ENCODE measurements at regions of chr15 and their contacts with region 1.

Region 1: DNA sequence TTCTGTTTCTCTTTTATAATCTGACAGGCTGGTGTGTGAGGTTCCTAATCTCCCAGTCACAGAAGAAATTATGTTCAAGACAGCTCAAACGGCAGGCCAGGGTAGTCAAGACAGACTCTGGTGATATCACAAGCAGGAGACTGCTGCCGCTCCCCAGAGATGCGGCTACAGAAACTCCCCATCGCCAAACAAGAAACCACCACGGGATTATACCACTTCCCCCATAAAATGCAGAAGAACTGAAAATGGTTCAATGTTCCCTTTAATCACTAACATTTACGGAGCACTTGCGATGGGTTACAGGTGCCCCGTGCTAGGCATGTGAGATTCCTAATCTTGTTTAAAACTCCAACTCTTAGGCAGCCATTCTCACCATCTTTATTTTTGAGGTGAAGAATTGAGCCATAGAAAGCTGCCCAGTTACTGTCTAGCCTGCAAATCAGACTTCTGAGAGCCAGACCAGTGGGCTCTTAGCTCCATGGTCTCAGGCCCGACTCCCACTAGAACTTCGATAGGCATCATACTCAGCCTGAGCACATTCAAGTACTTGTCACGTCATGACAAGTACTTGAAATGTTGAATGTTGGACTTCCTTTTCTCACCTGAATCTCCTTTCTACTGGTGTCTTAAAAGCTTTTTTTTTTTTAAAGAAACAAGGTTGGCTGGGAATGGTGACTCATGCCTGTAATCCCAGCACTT is 58.4 kb downstream of the TBC1D2B start:
- DNase-seq: no peak
- H3K4me3 ChIP-seq: no peak overlapping the region
- H3K27ac ChIP-seq: no peak overlapping the region
- H3K4me1 ChIP-seq: no peaks in the 10 kb centered on the region
- H3K27me3 ChIP-seq: no peaks in the 10 kb centered on the region
- CTCF ChIP-seq: no peak
- EP300 ChIP-seq: no peak
- POLR2A ChIP-seq: no peak
- RAD21 ChIP-seq: no peak

Region 2: GRCh38 chr15:77974098-77974414 is 45.0 kb before region 1 on chr15:
- CTCF ChIA-PET with region 1: no interaction called
- POLR2A ChIA-PET with region 1: no interaction called
- DNase-seq: peak in 1 of 2 experiments; percentile 33
- H3K4me3 ChIP-seq: no peak overlapping the region
- H3K27ac ChIP-seq: no peak overlapping the region
- H3K4me1 ChIP-seq: no peaks in the 10 kb centered on the region
- H3K27me3 ChIP-seq: no peaks in the 10 kb centered on the region
- CTCF ChIP-seq: no peak
- EP300 ChIP-seq: no peak
- POLR2A ChIP-seq: no peak
- RAD21 ChIP-seq: no peak

Region 3: GRCh38 chr15:78082106-78083078 is 63.3 kb after region 1 on chr15:
- CTCF ChIA-PET with region 1: interaction called, 11 read pairs
- POLR2A ChIA-PET with region 1: no interaction called
- DNase-seq: no peak
- H3K4me3 ChIP-seq: no peak overlapping the region
- H3K27ac ChIP-seq: no peak overlapping the region
- H3K4me1 ChIP-seq: no peaks in the 10 kb centered on the region
- H3K27me3 ChIP-seq: no peaks in the 10 kb centered on the region; a peak in 1 of 7 replicates
- CTCF ChIP-seq: no peak
- EP300 ChIP-seq: no peak
- POLR2A ChIP-seq: no peak
- RAD21 ChIP-seq: no peak